GM13977 (cell line): ENCODE measurements at regions of chr7 and their contacts with region 1.

Region 1: DNA sequence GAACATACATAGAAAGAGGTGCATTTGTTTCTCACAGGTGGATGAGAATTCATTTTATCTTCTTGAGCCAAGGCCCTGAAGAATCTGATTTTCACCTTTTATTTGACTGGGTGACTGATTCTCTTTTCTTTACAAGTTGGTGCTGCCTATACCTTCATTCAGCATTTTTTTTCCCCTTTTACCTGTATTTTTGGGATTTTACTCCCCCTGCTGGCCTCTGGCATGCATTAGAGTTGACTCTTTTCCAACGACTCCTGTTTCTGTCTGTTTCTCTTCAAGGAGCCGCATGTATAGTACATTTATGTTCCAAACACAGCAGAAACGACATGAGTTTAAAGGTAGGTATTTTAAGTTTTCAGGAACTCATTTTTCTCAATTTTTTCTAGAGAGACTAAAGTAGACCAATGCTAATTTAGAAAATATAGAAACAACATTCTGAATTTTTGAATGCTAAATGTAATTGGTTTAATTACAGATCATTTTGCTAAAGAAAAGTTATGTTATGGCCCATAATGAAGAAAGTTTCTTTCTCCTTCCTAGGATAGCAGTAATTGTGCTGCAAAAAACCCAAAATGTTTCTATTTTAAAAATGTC is 149.8 kb upstream of the HDAC9 start:
- DNase-seq: no peak
- CTCF ChIP-seq: peak; percentile 73

Region 2: GRCh38 chr7:17706734-17707133 is 639.0 kb before region 1 on chr7:
- in situ Hi-C with region 1: loop called (anchors 25 kb)
- DNase-seq: peak; percentile 43
- CTCF ChIP-seq: peak; percentile 68

Region 3: GRCh38 chr7:17769918-17770317 is 575.8 kb before region 1 on chr7:
- in situ Hi-C with region 1: no loop called
- DNase-seq: peak; percentile 39
- CTCF ChIP-seq: peak; percentile 90

Region 4: GRCh38 chr7:18163091-18163490 is 182.6 kb before region 1 on chr7:
- in situ Hi-C with region 1: no loop called
- DNase-seq: no peak
- CTCF ChIP-seq: no peak

Region 5: GRCh38 chr7:18295781-18296423 is 49.8 kb before region 1 on chr7:
- in situ Hi-C with region 1: no loop called
- DNase-seq: no peak
- CTCF ChIP-seq: no peak

Region 6: DNA sequence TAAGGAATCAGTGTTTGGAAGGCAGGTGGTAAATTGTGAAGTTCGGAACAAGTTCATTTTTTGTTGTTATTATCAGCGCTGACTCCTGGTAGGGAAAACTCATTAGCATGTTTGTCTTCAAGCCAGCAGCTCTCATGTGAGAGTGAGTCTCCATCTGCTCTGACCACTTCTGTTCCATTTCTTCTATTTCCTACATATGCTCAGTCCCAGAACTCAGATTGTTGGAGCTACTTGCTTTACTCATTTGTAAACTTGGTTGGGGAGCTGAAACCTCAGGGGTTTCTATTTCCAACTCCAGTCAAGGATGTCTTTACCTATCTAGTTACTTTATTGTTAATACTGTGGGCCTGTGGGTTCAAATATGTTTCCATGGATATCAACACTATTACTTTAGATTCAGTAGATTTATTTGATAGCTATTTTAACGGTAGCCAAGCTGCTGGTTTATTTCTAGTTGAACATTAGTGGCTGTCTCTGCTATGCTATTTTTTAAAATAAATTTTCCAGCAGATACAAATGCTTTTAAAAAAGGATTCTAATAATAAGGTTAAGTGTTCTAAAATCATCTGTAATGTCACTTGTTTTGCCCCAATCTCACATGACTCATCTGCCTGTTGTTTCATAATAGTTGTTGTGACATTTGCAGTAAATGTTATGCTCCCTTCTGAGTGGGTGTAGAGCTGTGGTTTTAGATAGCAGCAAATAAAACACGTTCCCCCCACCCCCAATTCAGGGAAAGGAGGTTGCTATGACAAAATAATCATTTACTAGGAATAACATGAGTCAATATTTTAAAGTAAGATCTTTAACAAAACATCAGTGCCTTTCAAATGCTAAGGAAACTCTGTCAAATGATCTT is 293.1 kb after region 1 on chr7:
- in situ Hi-C with region 1: no loop called
- DNase-seq: no peak
- CTCF ChIP-seq: no peak